Heart right ventricle (tissue), 16 donors: ENCODE measurements at regions of chr16 and their contacts with region 1.

Region 1: DNA sequence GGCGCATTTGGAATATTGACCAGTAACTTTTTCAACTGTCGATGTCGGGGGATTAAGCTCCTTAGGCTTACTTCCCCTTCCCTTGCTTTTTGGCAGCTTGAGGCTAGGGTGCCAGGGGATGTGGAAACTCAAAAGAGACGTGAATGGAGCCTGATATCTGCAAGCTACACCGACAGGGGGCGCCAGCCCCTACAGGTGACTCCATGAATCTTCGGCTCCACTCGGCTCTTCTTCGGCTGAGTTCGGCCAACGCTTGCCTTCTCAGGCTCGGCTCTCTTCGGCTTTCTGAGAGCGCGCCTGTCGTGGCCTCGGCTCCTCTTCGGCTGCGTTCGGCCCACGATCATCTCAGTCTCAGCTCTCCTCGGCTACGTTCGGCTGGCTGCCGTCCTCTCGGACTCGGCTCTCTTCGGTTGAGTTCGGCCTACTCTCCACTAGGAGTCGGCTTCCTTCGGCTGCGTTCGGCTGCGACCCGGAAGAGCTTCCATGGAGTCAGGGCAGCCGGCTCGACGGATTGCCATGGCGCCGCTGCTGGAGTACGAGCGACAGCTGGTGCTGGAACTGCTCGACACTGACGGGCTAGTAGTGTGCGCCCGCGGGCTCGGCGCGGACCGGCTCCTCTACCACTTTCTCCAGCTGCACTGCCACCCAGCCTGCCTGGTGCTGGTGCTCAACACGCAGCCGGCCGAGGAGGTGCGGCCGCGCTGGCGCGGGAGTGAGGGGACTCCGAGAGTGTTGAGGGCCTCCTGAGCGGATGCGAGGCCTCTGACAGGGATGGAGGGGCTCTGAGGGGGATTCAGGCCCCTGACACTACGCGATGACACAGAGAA is at the start of gene ERCC4:
- DNase-seq: peak; percentile 100
- ATAC-seq: peak; percentile 98 to 99 (median 98)
- H3K4me3 ChIP-seq: peak within 1 kb of the TSS; percentile 51 to 94 (median 80)
- H3K27ac ChIP-seq: peak within 1 kb of the TSS in 9 of 10 donors; percentile 59 to 90 (median 84)
- H3K4me1 ChIP-seq: peaks cover 7 to 38% (median 33%) of the 10 kb centered on the region in 9 donors
- H3K27me3 ChIP-seq: no peaks in the 10 kb centered on the region
- CTCF ChIP-seq: peak; percentile 71 to 93 (median 89)
- total RNA-seq, gene ERCC4: 5.1 to 13.1 (median 10.2) TPM

Region 2: GRCh38 chr16:13957197-13958078 is 37.5 kb after region 1 on chr16:
- intact Hi-C with region 1: no loop called
- DNase-seq: peak; percentile 51 to 54
- ATAC-seq: peak; percentile 88 to 98 (median 92)
- H3K4me3 ChIP-seq: peak overlapping the region in 7 of 10 donors; percentile 4 to 37 (median 32)
- H3K27ac ChIP-seq: peak overlapping the region; percentile 44 to 89 (median 69)
- H3K4me1 ChIP-seq: peaks cover 0 to 42% (median 15%) of the 10 kb centered on the region in 9 donors
- H3K27me3 ChIP-seq: no peaks in the 10 kb centered on the region
- CTCF ChIP-seq: no peak

Region 3: DNA sequence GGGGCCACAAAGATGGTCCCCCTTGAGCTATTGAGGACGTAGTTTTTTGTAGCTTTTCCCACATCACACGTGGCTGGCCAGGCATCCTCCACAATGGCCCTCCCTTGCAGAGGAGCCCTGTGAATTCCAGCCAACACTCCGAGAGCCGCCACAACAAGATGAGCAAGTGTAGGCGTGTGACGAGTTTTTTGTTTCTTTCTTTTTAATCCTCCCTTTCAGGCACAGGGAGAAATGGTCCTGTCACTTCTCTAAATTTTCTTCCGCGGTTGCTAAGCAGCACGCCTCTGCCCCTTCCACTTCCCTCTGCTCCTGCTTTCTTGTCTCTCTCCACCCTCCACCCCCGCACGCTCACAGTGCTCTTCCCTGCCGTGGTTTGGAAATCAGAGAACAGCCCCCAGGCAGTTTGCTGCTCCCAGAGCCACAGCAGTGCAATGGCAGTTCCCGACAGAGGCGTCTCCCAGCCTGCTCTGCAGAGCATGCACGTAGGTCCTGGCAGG is 83.2 kb after region 1 on chr16:
- intact Hi-C with region 1: loop called in 3 of 10 experiments (anchors 5 kb)
- DNase-seq: peak; percentile 55 to 80
- ATAC-seq: peak; percentile 57 to 86 (median 72)
- H3K4me3 ChIP-seq: peak overlapping the region in 8 of 10 donors; percentile 17 to 48 (median 42)
- H3K27ac ChIP-seq: peak overlapping the region in 9 of 10 donors; percentile 62 to 84 (median 75)
- H3K4me1 ChIP-seq: peaks cover 8 to 73% (median 61%) of the 10 kb centered on the region in 9 donors
- H3K27me3 ChIP-seq: no peaks in the 10 kb centered on the region
- CTCF ChIP-seq: peak in 4 of 9 donors; percentile 21 to 39 (median 31)

Region 4: GRCh38 chr16:14193316-14193871 is 273.5 kb after region 1 on chr16:
- intact Hi-C with region 1: loop called in 6 of 10 experiments (anchors 5 to 10 kb)
- DNase-seq: no peak
- ATAC-seq: peak in 4 of 8 donors; percentile 42 to 53 (median 51)
- H3K4me3 ChIP-seq: peak overlapping the region in 2 of 10 donors; percentile 13 to 15
- H3K27ac ChIP-seq: peak overlapping the region in 3 of 10 donors; percentile 11 to 45 (median 45)
- H3K4me1 ChIP-seq: peaks cover 0 to 83% (median 45%) of the 10 kb centered on the region in 9 donors
- H3K27me3 ChIP-seq: no peaks in the 10 kb centered on the region
- CTCF ChIP-seq: no peak

Region 5: DNA sequence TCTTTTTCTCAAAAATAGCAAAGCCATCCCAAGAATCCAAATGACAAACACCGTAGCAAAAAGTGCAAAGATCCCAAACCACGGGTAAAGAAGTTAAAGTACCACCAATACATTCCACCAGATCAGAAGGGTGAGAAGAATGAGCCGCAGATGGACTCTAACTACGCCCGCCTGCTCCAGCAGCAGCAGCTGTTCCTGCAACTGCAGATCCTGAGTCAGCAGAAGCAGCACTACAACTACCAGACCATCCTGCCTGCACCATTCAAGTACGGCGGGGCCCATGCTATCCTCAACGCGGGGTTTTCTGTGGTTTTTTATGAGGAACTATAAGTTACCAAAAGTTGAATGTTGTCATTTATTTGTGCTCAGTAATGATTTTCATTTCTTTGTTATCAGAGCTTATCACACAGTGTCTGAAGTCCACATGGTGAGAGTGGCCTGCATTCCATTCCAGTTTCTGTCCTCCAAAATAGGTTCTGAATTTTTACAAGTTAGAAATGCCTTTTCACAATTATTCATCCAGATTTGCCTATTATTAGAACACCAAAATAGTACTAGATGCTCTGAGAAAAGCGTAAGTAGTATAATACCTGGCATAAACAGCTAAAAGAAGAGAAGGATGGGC is 320.4 kb after region 1 on chr16:
- intact Hi-C with region 1: loop called in 7 of 10 experiments (anchors 5 to 10 kb)
- DNase-seq: no peak
- ATAC-seq: peak in 6 of 8 donors; percentile 61 to 78 (median 67)
- H3K4me3 ChIP-seq: no peak overlapping the region
- H3K27ac ChIP-seq: peak overlapping the region in 7 of 10 donors; percentile 2 to 67 (median 50)
- H3K4me1 ChIP-seq: peaks cover 0 to 30% (median 24%) of the 10 kb centered on the region in 9 donors
- H3K27me3 ChIP-seq: no peaks in the 10 kb centered on the region
- CTCF ChIP-seq: no peak

Region 6: DNA sequence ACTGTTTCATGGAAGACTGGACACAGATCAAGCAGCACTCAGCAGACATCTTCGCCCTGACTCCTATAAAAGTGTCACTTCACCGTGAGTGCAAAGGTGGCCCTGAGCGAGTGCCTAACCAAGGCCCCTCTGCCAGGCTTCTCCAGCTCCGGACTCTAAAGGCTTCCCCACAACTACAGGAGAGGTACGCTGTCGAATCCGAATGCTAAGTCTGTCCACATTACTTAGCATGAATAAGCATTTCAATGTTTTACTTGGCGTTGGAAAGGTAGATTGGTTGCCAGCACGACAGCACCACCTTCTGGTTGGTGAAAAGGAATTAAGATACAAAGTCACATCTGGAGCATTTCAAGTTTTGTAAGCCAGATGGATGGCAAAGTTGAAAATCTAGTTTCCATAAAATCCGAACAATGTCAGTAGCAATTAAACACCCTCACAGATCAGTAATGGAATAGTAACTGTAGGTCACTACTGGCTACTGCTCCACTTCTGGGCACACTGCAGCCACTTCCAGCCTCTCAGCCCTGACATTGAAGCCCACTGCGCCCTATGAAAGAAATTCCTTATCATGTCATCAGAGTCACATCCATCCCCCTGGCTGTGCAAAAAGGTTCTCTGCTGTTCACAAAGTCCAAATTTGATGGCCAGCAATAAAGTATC is 609.2 kb after region 1 on chr16:
- intact Hi-C with region 1: loop called in 9 of 10 experiments (anchors 5 to 10 kb)
- DNase-seq: peak; percentile 55 to 81
- ATAC-seq: peak; percentile 79 to 90 (median 85)
- H3K4me3 ChIP-seq: peak overlapping the region in 7 of 10 donors; percentile 22 to 38 (median 24)
- H3K27ac ChIP-seq: peak overlapping the region in 6 of 10 donors; percentile 28 to 68 (median 53)
- H3K4me1 ChIP-seq: peaks cover 0 to 26% (median 11%) of the 10 kb centered on the region in 9 donors
- H3K27me3 ChIP-seq: no peaks in the 10 kb centered on the region
- CTCF ChIP-seq: peak; percentile 53 to 88 (median 76)